ENCODE measurements at regions of chrX and their contacts with region 1.

Region 1: GRCh38 chrX:42943051-42943974 is 165.3 kb upstream of the PPP1R2C start:
- DNase-seq: peak; percentile 54 to 68 (median 66)
- H3K4me3 ChIP-seq: no peak overlapping the region
- H3K4me3 Mint-ChIP-seq: peak overlapping the region in 7 of 8 donors; percentile 45 to 81 (median 72)
- H3K27ac ChIP-seq: peak overlapping the region; percentile 64
- H3K27ac Mint-ChIP-seq: peak overlapping the region; percentile 87 to 96 (median 94)
- H3K4me1 ChIP-seq: peaks cover 89% of the 10 kb centered on the region
- H3K4me1 Mint-ChIP-seq: peaks cover 42 to 96% (median 84%) of the 10 kb centered on the region in 4 donors
- H3K27me3 ChIP-seq: no peaks in the 10 kb centered on the region
- H3K27me3 Mint-ChIP-seq: no peaks in the 10 kb centered on the region

Region 2: DNA sequence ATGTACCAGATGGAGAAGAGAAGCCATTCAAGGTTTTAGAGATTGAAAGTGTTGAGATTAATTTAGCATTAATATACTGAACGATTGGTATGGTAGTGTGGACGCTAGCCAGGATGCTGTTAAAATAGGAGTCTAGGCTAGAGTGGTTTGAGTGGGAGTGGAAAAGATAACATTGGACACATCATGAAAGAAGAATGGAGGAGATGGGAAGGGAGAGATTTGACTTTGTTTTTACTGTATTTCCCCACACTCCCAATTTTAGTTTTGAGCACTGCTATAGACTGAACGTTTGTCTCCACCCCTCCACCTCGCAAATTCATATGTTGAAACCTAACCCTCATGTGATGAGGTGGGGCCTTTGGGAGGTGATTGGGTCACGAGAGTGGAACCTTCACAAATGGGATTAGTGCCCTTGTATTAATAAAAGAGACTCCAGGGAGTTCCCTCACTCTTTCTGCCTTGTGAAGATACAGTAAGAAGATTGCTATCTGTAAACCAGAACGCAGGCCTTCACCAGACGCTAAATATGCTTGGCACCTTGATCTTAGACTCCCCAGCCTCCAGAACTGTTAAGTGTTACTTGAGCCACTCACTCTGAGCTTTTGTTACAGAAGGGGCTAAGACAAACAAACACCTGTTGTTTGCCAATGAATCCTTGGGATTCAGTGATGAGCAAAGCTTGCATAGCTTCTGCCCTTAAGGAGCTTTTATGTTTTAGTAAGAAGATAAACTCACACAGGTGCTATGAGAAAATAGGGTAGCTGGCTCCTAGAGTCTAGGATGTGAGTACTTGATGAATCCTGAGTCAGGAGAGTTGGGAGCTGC is 1832.3 kb before region 1 on chrX:
- CTCF ChIA-PET with region 1: no interaction called
- POLR2A ChIA-PET with region 1: no interaction called
- intact Hi-C with region 1: no loop called
- DNase-seq: no peak
- H3K4me3 ChIP-seq: no peak overlapping the region
- H3K4me3 Mint-ChIP-seq: peak overlapping the region in 6 of 8 donors; percentile 26 to 74 (median 50)
- H3K27ac ChIP-seq: peak overlapping the region; percentile 10
- H3K27ac Mint-ChIP-seq: peak overlapping the region in 6 of 7 donors; percentile 1 to 88 (median 48)
- H3K4me1 ChIP-seq: peaks cover 73% of the 10 kb centered on the region
- H3K4me1 Mint-ChIP-seq: peaks cover 51 to 77% (median 65%) of the 10 kb centered on the region in 4 donors
- H3K27me3 ChIP-seq: no peaks in the 10 kb centered on the region
- H3K27me3 Mint-ChIP-seq: no peaks in the 10 kb centered on the region

Region 3: DNA sequence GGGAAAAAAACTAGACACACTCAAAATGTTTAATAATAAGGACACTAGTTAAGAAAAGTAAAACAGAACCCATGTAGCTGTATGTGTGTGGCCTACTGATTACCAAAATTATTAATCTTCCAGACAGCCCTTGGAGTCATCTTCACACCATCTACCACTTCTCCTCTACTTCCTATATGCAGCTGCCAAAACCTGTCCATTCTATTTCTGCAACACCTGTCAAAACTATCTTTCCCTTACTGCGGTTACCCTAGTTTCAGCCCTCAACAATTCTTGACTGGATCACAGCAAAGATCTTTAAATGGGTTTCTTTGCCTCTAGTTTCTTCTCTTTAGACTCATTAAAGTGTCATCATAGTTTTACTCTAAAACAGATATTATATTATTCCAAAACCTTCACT is 1146.7 kb before region 1 on chrX:
- CTCF ChIA-PET with region 1: interaction called, 23 read pairs
- POLR2A ChIA-PET with region 1: interaction called, 27 read pairs
- intact Hi-C with region 1: loop called (anchors 2 kb)
- DNase-seq: peak in 3 of 5 donors; percentile 2 to 37 (median 6)
- H3K4me3 ChIP-seq: no peak overlapping the region
- H3K4me3 Mint-ChIP-seq: peak overlapping the region in 2 of 8 donors; percentile 15 to 63
- H3K27ac ChIP-seq: no peak overlapping the region
- H3K27ac Mint-ChIP-seq: peak overlapping the region in 3 of 7 donors; percentile 3 to 68 (median 5)
- H3K4me1 ChIP-seq: peaks cover 45% of the 10 kb centered on the region
- H3K4me1 Mint-ChIP-seq: peaks cover 19 to 45% (median 33%) of the 10 kb centered on the region in 4 donors
- H3K27me3 ChIP-seq: no peaks in the 10 kb centered on the region
- H3K27me3 Mint-ChIP-seq: no peaks in the 10 kb centered on the region

Region 4: GRCh38 chrX:41923257-41923969 is 1019.9 kb before region 1 on chrX and contains the start of gene CASK:
- CTCF ChIA-PET with region 1: interaction called, 4 read pairs
- POLR2A ChIA-PET with region 1: interaction called, 33 read pairs
- intact Hi-C with region 1: loop called (anchors 1 kb)
- DNase-seq: peak; percentile 88 to 90 (median 89)
- H3K4me3 ChIP-seq: peak within 1 kb of the TSS; percentile 55 to 72
- H3K4me3 Mint-ChIP-seq: peak within 1 kb of the TSS; percentile 88 to 96 (median 92)
- H3K27ac ChIP-seq: peak within 1 kb of the TSS; percentile 58
- H3K27ac Mint-ChIP-seq: peak within 1 kb of the TSS; percentile 86 to 95 (median 94)
- H3K4me1 ChIP-seq: peaks cover 21% of the 10 kb centered on the region
- H3K4me1 Mint-ChIP-seq: peaks cover 10 to 43% (median 22%) of the 10 kb centered on the region in 4 donors
- H3K27me3 ChIP-seq: no peaks in the 10 kb centered on the region
- H3K27me3 Mint-ChIP-seq: no peaks in the 10 kb centered on the region
- total RNA-seq, gene CASK: 115 to 116 TPM

Region 5: GRCh38 chrX:42714981-42715700 is 228.2 kb before region 1 on chrX:
- CTCF ChIA-PET with region 1: interaction called, 4 read pairs
- POLR2A ChIA-PET with region 1: interaction called, 10 read pairs
- intact Hi-C with region 1: no loop called
- DNase-seq: peak in 4 of 5 donors; percentile 28 to 42 (median 32)
- H3K4me3 ChIP-seq: no peak overlapping the region
- H3K4me3 Mint-ChIP-seq: peak overlapping the region in 4 of 8 donors; percentile 3 to 27 (median 6)
- H3K27ac ChIP-seq: no peak overlapping the region
- H3K27ac Mint-ChIP-seq: peak overlapping the region in 2 of 7 donors; percentile 0 to 8
- H3K4me1 ChIP-seq: no peaks in the 10 kb centered on the region
- H3K4me1 Mint-ChIP-seq: peaks cover 4 to 20% (median 6%) of the 10 kb centered on the region in 4 donors
- H3K27me3 ChIP-seq: no peaks in the 10 kb centered on the region
- H3K27me3 Mint-ChIP-seq: no peaks in the 10 kb centered on the region

Region 6: GRCh38 chrX:43108828-43109227 is 165.5 kb after region 1 on chrX:
- CTCF ChIA-PET with region 1: no interaction called
- POLR2A ChIA-PET with region 1: no interaction called
- intact Hi-C with region 1: loop called (anchors 10 kb)
- DNase-seq: no peak
- H3K4me3 ChIP-seq: no peak overlapping the region
- H3K4me3 Mint-ChIP-seq: no peak overlapping the region
- H3K27ac ChIP-seq: no peak overlapping the region
- H3K27ac Mint-ChIP-seq: no peak overlapping the region
- H3K4me1 ChIP-seq: no peaks in the 10 kb centered on the region
- H3K4me1 Mint-ChIP-seq: peaks cover 5 to 11% (median 7%) of the 10 kb centered on the region in 4 donors
- H3K27me3 ChIP-seq: no peaks in the 10 kb centered on the region
- H3K27me3 Mint-ChIP-seq: no peaks in the 10 kb centered on the region

Region 7: DNA sequence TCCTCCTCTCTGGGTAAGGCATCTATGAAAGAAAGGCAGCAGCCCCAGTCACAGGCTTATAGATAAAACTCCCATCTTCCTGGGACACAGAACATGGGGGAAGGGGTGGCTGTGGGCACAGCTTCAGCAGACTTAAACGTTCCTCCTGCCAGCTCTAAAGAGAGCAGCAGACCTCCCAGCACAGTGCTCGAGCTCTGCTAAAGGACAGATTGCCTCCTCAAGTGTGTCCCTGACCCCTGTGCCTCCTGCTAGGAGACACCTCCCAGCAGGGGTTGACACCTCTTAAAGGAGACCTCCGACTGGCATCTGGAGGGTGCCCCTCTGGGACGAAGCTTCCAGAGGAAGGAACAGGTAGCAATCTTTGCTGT is 1310.2 kb after region 1 on chrX:
- CTCF ChIA-PET with region 1: no interaction called
- POLR2A ChIA-PET with region 1: no interaction called
- intact Hi-C with region 1: no loop called
- DNase-seq: no peak
- H3K4me3 ChIP-seq: no peak overlapping the region
- H3K4me3 Mint-ChIP-seq: peak overlapping the region in 7 of 8 donors; percentile 75 to 83 (median 81)
- H3K27ac ChIP-seq: peak overlapping the region; percentile 46
- H3K27ac Mint-ChIP-seq: peak overlapping the region; percentile 80 to 96 (median 92)
- H3K4me1 ChIP-seq: peaks cover 31% of the 10 kb centered on the region
- H3K4me1 Mint-ChIP-seq: peaks cover 14 to 61% (median 43%) of the 10 kb centered on the region in 4 donors
- H3K27me3 ChIP-seq: no peaks in the 10 kb centered on the region
- H3K27me3 Mint-ChIP-seq: no peaks in the 10 kb centered on the region

Measured in CD4-positive, alpha-beta memory T cell (primary cell).